ENCODE measurements at regions of chr7 and their contacts with region 1.

Region 1: GRCh38 chr7:100611974-100612729 is at the start of gene MOSPD3:
- DNase-seq: peak; percentile 100
- ATAC-seq: peak; percentile 98
- H3K4me3 ChIP-seq: peak within 1 kb of the TSS; percentile 80 to 82
- H3K27ac ChIP-seq: peak within 1 kb of the TSS; percentile 86
- H3K4me1 ChIP-seq: peaks cover 5% of the 10 kb centered on the region
- H3K27me3 ChIP-seq: no peaks in the 10 kb centered on the region
- CTCF ChIP-seq: no peak
- total RNA-seq, gene MOSPD3: 25.0 TPM

Region 2: DNA sequence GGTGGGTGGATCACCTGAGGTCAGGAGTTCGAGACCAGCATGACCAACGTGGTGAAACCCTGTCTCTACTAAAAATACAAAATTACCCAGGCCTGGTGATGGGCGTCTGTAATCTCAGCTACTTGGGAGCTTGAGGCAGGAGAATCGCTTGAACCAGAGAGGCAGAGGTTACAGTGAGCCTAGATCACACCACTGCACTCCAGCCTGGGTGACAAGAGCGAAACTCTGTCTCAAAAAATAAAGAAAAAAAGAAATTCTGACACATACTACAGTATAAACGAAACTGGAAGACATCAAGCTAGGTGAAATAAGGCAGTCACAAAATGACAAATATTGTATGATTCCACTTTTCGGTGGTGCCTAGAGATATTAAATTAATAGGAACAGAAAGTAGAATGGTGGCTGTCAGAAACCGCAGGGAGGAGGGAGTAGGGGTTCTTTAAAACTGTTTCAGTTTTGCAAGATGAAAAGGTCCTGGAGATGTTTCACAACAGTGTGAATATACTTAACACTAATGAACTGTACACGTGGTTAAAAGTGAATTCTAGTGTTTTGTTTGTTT is 215.7 kb before region 1 on chr7:
- CTCF ChIA-PET with region 1: no interaction called
- POLR2A ChIA-PET with region 1: no interaction called
- in situ Hi-C with region 1: no loop called
- intact Hi-C with region 1: no loop called
- DNase-seq: no peak
- ATAC-seq: no peak
- H3K4me3 ChIP-seq: no peak overlapping the region
- H3K27ac ChIP-seq: no peak overlapping the region
- H3K4me1 ChIP-seq: no peaks in the 10 kb centered on the region
- H3K27me3 ChIP-seq: no peaks in the 10 kb centered on the region
- CTCF ChIP-seq: no peak

Region 3: DNA sequence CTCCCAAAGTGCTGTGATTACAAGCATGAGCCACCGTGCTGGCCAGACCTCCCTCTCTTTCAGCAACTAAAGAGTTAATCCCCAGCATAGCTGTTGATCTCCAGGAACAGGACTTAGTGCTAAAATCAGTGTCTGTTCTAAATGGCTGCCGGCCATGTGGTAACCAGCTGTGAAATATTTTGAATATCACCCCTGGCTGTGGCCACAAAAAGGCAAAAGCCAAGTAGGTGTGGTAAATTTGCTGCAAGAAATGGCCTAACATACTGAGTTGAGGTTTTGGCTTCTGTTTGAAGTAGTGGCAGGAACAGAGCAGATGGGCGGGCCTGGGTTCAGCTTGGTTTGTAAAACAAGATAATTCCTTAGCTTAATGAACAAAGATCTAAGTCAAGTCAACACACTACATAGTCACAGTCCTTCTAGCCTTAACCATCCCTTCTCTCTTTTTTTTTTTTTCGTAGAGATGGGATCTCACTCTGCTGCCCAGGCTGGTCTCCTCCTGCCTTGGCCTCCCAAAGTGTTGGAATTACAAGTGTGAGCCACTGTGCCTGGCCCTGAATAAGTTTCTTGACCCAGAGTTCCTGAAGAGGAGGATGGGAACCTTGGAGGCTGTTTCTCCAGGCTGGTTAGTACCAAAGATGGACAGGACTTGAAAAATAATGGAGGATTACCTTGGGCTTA is 95.9 kb before region 1 on chr7:
- CTCF ChIA-PET with region 1: no interaction called
- POLR2A ChIA-PET with region 1: no interaction called
- in situ Hi-C with region 1: no loop called
- intact Hi-C with region 1: no loop called
- DNase-seq: no peak
- ATAC-seq: peak; percentile 59; the same call in 1 of the 2 replicates
- H3K4me3 ChIP-seq: no peak overlapping the region
- H3K27ac ChIP-seq: 0 out of 2 replicates have a peak overlapping the region, but pooled peaks have one; percentile 6
- H3K4me1 ChIP-seq: no peaks in the 10 kb centered on the region
- H3K27me3 ChIP-seq: no peaks in the 10 kb centered on the region
- CTCF ChIP-seq: no peak

Region 4: GRCh38 chr7:100585511-100586265 is 26.5 kb before region 1 on chr7 and contains the start of gene LRCH4:
- CTCF ChIA-PET with region 1: interaction called, 7 read pairs
- POLR2A ChIA-PET with region 1: interaction called, 12 read pairs
- in situ Hi-C with region 1: no loop called
- intact Hi-C with region 1: no loop called
- DNase-seq: no peak
- ATAC-seq: peak; percentile 64
- H3K4me3 ChIP-seq: peak within 1 kb of the TSS; percentile 89 to 93
- H3K27ac ChIP-seq: peak within 1 kb of the TSS; percentile 86
- H3K4me1 ChIP-seq: peaks cover 12% of the 10 kb centered on the region
- H3K27me3 ChIP-seq: no peaks in the 10 kb centered on the region
- CTCF ChIP-seq: no peak
- total RNA-seq, gene LRCH4: 66.4 TPM

Region 5: GRCh38 chr7:100632951-100633717 is 21.0 kb after region 1 on chr7:
- CTCF ChIA-PET with region 1: interaction called, 8 read pairs
- POLR2A ChIA-PET with region 1: interaction called, 13 read pairs
- in situ Hi-C with region 1: no loop called
- intact Hi-C with region 1: no loop called
- DNase-seq: no peak
- ATAC-seq: peak; percentile 85
- H3K4me3 ChIP-seq: peak overlapping the region; percentile 59 to 62
- H3K27ac ChIP-seq: peak overlapping the region; percentile 76
- H3K4me1 ChIP-seq: no peaks in the 10 kb centered on the region
- H3K27me3 ChIP-seq: no peaks in the 10 kb centered on the region
- CTCF ChIP-seq: peak; percentile 74

Measured in Panc1 (cell line).